ENCODE measurements at regions of chr1 and their contacts with region 1.

Region 1: GRCh38 chr1:160681067-160681890 is 30.3 kb downstream of the CD48 start:
- DNase-seq: peak; percentile 80
- H3K4me3 Mint-ChIP-seq: no peak overlapping the region
- H3K27ac Mint-ChIP-seq: peak overlapping the region; percentile 94
- H3K4me1 Mint-ChIP-seq: peaks cover 66% of the 10 kb centered on the region
- H3K27me3 Mint-ChIP-seq: no peaks in the 10 kb centered on the region

Region 2: GRCh38 chr1:160726498-160727315 is 45.4 kb after region 1 on chr1:
- intact Hi-C with region 1: loop called (anchors 1 kb)
- DNase-seq: peak; percentile 54
- H3K4me3 Mint-ChIP-seq: no peak overlapping the region
- H3K27ac Mint-ChIP-seq: no peak overlapping the region
- H3K4me1 Mint-ChIP-seq: peaks cover 30% of the 10 kb centered on the region
- H3K27me3 Mint-ChIP-seq: no peaks in the 10 kb centered on the region

Region 3: DNA sequence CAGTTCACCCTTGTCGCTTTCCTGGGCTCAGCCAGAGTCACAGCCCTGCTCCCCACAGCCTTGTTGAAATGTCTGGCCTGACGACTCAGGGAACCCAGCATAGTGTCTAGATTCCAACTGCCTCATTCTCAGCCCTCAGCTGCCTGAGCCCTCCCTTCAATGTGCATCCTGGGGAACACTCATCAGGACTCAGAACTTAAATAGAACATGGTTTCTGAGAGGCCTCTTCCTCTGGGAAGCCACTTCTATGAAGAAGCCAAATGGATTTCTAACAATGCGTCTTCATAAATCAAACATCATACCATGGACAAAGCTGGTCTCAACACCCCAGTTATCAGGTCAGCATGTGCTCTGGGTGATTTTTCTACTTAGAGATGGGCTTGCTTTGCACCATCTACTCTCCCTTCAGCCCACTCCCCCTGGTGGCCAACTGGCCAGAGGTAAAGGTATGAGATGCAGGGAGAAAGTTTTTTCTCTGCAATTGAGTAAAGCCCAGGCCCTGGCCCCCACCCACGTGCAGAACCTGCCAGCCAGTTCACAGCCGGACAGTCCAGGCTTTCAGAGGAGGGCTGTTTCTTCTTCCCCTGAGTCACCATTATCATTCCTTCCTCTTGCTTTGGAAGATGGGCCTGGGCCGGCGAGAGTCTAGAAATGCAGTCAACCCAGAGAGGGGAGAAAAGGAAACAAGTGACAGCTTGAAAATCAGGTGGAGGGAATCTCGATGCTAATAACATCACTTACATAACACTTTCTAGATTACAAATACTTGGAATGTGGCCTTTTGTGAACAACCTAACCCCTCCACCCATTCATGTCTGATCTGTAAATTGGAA is 149.3 kb after region 1 on chr1:
- intact Hi-C with region 1: loop called (anchors 1 kb)
- DNase-seq: peak; percentile 59
- H3K4me3 Mint-ChIP-seq: no peak overlapping the region
- H3K27ac Mint-ChIP-seq: no peak overlapping the region
- H3K4me1 Mint-ChIP-seq: peaks cover 13% of the 10 kb centered on the region
- H3K27me3 Mint-ChIP-seq: no peaks in the 10 kb centered on the region

Region 4: DNA sequence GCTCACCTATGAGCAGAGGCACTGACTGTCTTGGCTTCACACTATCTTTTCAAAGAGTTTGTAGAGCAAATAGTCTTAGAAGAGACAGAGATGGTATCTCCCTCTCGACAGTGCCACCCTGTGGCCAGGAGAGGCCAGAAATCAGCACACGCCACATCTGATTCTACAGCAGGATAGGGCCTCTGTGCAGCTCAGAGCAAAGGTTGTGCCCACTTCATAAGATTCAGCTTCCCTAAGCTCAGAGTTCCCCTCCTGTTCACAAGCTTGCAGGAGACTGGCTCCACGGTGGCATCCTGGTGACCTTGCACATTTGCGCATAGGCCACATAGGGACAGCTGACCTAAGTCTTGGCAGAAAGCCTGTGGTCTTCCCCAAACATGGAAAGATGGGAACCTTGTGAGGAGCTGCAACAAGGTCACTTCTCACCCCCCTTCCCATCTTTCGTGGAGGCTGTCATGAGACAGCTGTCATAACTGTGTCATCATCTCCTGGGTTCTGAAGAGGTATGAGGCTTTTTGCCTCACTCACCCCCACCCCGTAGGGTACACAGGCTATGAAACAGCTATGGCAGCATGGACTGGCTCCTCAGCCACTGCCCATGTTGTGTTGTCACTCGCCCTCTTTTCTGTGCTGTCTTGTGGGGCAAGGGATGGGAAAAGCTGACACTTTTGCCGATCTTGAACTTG is 270.3 kb after region 1 on chr1:
- intact Hi-C with region 1: loop called (anchors 1 kb)
- DNase-seq: peak; percentile 59
- H3K4me3 Mint-ChIP-seq: no peak overlapping the region
- H3K27ac Mint-ChIP-seq: no peak overlapping the region
- H3K4me1 Mint-ChIP-seq: peaks cover 7% of the 10 kb centered on the region
- H3K27me3 Mint-ChIP-seq: no peaks in the 10 kb centered on the region